GM12878 (cell line): ENCODE measurements at regions of chr14 and their contacts with region 1.

Region 1: DNA sequence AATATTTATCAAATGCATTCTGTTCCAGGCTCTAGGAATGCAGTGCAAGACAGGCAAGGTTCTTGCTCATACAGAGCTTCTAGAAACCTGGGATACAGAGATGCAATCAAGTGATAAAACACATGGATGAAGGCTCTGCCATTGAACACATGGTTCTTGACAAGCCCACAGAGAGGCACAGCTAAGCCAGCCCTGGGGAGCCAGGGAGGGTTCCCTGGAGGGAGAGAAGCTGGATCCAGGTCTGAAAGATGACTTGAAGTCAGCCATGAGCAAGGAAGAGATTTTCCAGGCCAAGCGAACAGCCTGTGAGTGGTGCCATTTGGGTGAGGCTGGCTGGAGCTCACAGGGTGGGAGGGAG is 66.2 kb downstream of the IRF2BPL start:
- DNase-seq: no peak
- ATAC-seq: no peak
- H3K4me3 ChIP-seq: peak overlapping the region; percentile 50; the same call in 1 of the 2 replicates
- H3K27ac ChIP-seq: peak overlapping the region; percentile 90
- H3K4me1 ChIP-seq: peaks cover 77% of the 10 kb centered on the region
- H3K27me3 ChIP-seq: no peaks in the 10 kb centered on the region
- CTCF ChIP-seq: no peak
- EP300 ChIP-seq: no peak
- POLR2A ChIP-seq: no peak
- RAD21 ChIP-seq: no peak

Region 2: DNA sequence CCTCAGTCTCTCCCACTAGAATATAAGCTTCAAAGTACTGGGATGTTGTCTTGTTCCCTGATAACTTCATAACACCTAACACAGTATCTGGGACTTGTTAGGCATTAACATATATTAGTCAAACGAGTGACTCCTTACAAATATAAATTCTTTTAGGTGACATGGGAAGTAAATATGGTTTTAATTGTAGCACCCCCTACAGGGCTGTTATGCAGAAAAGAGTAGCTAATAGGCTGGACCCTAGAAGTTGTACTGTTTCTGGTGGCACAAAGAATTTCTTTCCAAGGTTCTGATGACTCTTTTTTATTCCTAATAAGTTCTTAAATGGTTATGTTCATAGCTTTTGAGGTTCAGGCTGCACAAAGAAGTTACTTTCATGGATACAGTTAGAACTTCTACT is 780.7 kb before region 1 on chr14:
- CTCF ChIA-PET with region 1: no interaction called
- POLR2A ChIA-PET with region 1: no interaction called
- RAD21 ChIA-PET with region 1: no interaction called
- SMC1A ChIA-PET with region 1: no interaction called
- in situ Hi-C with region 1: no loop called
- intact Hi-C with region 1: no loop called
- DNase-seq: no peak
- ATAC-seq: no peak
- H3K4me3 ChIP-seq: no peak overlapping the region
- H3K27ac ChIP-seq: no peak overlapping the region
- H3K4me1 ChIP-seq: peaks cover 17% of the 10 kb centered on the region
- H3K27me3 ChIP-seq: no peaks in the 10 kb centered on the region
- CTCF ChIP-seq: peak; percentile 11 to 25 (median 16); a peak in 1 of 6 replicates
- EP300 ChIP-seq: no peak
- POLR2A ChIP-seq: no peak
- RAD21 ChIP-seq: 0 out of 2 replicates have a peak, but pooled peaks have one; percentile 7

Region 3: DNA sequence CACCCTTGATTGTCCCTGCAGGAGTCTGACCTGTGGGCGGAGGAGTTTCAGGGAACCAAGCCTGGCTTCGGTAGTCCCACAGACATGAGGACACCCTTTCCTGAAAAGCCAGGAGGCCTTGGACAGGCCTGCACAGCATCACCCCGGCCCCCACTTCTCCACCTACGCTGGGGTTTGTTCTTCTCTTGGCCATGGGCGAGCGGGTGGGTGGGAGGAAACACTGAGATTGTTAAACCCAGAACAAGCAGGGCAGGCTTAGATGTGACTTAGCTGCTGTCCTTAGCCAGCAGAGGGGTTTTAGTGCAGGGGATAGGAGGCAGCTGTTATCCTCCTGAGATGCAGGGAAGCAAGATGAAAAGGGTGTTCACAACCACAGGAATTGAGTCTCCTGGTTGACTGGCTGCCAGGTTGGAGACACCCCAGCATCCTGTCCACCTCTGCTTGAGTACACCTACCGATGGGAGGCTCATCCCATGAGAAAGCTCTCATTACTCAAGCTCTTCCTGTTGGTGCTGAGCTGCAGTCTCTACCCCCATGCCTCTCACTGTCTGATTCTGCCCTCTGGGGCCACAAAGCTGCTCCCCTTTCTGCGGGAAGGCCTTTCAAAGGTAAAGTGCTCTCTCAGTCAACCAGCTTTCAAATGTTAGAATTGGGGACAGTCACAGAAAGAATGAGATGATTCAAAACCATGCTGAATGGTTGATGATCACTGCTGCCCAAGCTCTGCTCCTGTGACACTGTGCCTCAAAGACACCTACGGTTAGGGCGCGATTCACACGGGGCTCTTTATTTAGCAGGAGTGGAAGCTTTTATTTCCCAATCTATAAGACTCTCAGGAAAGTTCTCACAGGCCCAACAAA is 20.1 kb before region 1 on chr14:
- CTCF ChIA-PET with region 1: interaction called, 21 read pairs
- POLR2A ChIA-PET with region 1: interaction called, 95 read pairs
- RAD21 ChIA-PET with region 1: interaction called, 285 read pairs
- SMC1A ChIA-PET with region 1: interaction called, 179 read pairs
- in situ Hi-C with region 1: no loop called
- intact Hi-C with region 1: loop called (anchors 2 kb)
- DNase-seq: peak; percentile 72
- ATAC-seq: peak; percentile 29
- H3K4me3 ChIP-seq: no peak overlapping the region
- H3K27ac ChIP-seq: no peak overlapping the region
- H3K4me1 ChIP-seq: peaks cover 21% of the 10 kb centered on the region
- H3K27me3 ChIP-seq: no peaks in the 10 kb centered on the region
- CTCF ChIP-seq: no peak; a peak in 1 of 6 replicates
- EP300 ChIP-seq: no peak
- POLR2A ChIP-seq: no peak
- RAD21 ChIP-seq: no peak

Region 4: GRCh38 chr14:76977793-76978720 is 15.8 kb after region 1 on chr14:
- CTCF ChIA-PET with region 1: interaction called, 22 read pairs
- POLR2A ChIA-PET with region 1: interaction called, 36 read pairs
- RAD21 ChIA-PET with region 1: interaction called, 71 read pairs
- SMC1A ChIA-PET with region 1: interaction called, 38 read pairs
- in situ Hi-C with region 1: no loop called
- intact Hi-C with region 1: loop called (anchors 2 kb)
- DNase-seq: peak; percentile 81
- ATAC-seq: peak; percentile 98
- H3K4me3 ChIP-seq: no peak overlapping the region
- H3K27ac ChIP-seq: peak overlapping the region; percentile 65
- H3K4me1 ChIP-seq: peaks cover 20% of the 10 kb centered on the region
- H3K27me3 ChIP-seq: no peaks in the 10 kb centered on the region
- CTCF ChIP-seq: no peak
- EP300 ChIP-seq: peak; percentile 64 to 75; a peak in 2 of 4 replicates
- POLR2A ChIP-seq: peak; percentile 72
- RAD21 ChIP-seq: 0 out of 2 replicates have a peak, but pooled peaks have one; percentile 20

Region 5: DNA sequence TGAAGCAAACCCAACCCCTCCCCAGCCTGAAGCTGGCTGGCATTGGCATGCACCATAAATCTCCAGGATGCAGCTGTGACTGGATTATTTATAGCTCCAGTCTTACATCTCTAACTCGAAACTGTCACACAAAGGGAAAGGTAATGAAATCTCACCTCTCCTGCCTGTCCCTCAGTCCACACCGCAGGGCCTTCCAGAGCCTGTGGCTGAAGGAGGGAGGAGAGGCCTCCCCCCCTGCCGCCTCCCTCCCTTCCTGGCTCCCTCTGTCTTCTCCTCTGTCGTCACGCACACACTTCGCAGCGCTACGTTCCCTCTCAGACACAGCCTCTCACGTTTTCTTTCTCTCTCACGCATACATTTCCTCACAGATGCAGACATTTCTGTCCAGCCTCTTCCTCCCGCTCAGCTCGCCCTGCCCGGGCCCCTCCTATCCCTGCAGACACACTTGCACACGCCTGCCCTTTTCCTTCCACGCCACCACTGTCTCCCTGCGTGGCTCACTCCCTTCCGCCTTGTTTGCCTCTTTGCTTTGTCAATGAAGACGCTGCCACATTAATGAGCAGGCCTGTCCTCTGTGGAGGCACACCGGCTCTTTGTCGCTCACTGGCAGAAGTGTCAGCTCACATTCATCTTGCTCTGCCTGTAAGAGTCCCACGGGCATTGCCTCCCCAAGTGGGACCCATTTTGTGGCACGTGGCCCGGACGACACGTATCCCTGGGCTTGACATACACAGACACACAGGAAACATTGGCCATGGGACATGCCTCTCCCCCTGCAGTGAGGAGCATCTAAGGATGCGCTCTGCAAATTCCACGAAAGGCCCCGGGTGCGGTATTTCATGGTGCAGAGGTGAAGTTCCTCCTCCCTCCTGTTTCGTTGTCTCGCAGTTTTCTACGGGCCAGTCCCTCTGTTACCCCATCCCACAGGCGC is 38.3 kb after region 1 on chr14:
- CTCF ChIA-PET with region 1: interaction called, 4 read pairs
- POLR2A ChIA-PET with region 1: interaction called, 6 read pairs
- RAD21 ChIA-PET with region 1: interaction called, 13 read pairs
- SMC1A ChIA-PET with region 1: interaction called, 7 read pairs
- in situ Hi-C with region 1: no loop called
- intact Hi-C with region 1: no loop called
- DNase-seq: no peak
- ATAC-seq: peak; percentile 57
- H3K4me3 ChIP-seq: peak overlapping the region; percentile 56; the same call in 1 of the 2 replicates
- H3K27ac ChIP-seq: peak overlapping the region; percentile 66
- H3K4me1 ChIP-seq: peaks cover 29% of the 10 kb centered on the region
- H3K27me3 ChIP-seq: no peaks in the 10 kb centered on the region
- CTCF ChIP-seq: no peak
- EP300 ChIP-seq: no peak
- POLR2A ChIP-seq: peak; percentile 57
- RAD21 ChIP-seq: no peak

Region 6: DNA sequence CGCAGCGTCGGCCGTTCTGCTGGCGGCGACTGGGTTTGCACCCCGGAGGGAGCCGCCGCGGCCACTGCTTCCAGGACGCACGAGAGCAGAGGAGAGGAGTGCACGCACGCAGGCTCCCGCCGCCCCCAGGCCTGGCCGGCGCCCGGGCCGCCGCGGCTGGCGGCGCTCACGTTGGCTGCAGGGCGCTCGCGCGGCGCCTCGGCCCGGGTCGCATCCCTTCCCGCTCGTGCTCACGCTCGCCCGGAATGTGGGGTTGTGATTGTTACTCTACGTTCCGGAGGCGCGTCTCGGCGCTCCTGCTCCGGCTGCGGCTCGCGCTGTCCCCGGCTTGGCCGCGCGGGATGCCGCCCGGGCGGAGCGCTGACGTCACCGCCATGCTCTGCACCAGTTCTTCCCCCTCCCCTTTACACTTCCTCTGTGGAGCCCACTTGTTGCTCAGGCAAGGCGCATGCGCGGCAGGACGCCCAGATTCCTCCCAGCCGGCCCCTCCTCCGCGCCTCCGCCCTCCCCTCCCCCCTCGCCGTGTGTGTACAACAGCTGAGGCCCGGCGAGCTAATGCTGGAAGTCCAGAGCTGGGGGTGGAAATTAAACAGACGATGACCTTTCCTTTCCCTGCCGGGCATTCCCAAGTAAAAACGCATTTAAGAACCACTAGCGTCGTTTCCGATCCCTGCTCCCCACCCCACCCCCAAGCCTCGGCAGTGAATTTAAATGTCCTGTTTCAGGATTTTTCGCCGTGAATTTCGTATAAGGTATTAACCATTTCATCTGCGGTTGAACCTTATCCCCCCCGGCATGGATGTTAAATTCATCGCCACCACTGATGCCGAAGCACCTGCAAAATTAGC is 66.3 kb after region 1 on chr14 and contains the start of gene IRF2BPL:
- CTCF ChIA-PET with region 1: interaction called, 22 read pairs
- POLR2A ChIA-PET with region 1: interaction called, 48 read pairs
- RAD21 ChIA-PET with region 1: interaction called, 101 read pairs
- SMC1A ChIA-PET with region 1: interaction called, 133 read pairs
- in situ Hi-C with region 1: no loop called
- intact Hi-C with region 1: loop called (anchors 1 kb)
- DNase-seq: peak; percentile 87
- ATAC-seq: peak; percentile 61
- H3K4me3 ChIP-seq: peak within 1 kb of the TSS; percentile 81
- H3K27ac ChIP-seq: peak within 1 kb of the TSS; percentile 98
- H3K4me1 ChIP-seq: peaks cover 38% of the 10 kb centered on the region
- H3K27me3 ChIP-seq: no peaks in the 10 kb centered on the region
- CTCF ChIP-seq: no peak
- EP300 ChIP-seq: peak in 1 of 2 experiments; percentile 29; a peak in 2 of 4 replicates
- POLR2A ChIP-seq: peak; percentile 83
- RAD21 ChIP-seq: no peak
- polyA plus RNA-seq, gene IRF2BPL: 1.2 to 1.9 TPM

Region 7: DNA sequence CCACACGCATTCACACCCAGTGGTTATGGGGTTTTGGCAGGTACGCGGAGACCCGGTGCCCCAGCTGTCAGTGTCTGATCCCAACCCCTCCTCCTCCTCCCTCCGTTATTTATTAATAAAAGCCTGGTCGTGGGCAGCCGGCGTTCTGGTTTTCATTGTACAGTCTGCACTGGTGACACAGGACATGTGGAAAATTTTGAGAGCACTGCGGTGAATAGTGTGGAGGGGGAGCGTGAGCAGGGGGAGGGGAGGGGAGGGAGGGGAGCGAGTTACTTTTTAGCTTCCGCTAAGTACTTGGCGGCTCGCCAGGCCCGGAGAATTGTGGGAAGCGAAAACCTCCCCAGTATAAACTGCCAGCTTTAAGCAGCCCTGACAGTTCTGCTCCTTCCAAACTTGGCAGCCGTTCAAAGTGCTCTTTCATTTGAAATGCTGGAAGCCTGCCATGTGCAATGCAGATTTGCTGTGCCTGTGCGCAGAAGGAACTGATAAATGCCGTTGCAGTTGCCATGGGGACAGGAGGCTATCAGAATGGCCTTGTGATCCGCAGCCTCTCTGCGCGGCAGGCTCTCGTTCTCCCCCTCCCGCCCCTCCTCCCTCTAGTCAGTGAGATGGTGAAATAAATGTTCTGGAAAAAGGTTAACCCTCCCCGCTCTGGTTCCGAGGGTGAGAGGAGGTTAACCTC is 77.9 kb after region 1 on chr14:
- CTCF ChIA-PET with region 1: interaction called, 33 read pairs
- POLR2A ChIA-PET with region 1: interaction called, 173 read pairs
- RAD21 ChIA-PET with region 1: interaction called, 125 read pairs
- SMC1A ChIA-PET with region 1: interaction called, 172 read pairs
- in situ Hi-C with region 1: loop called (anchors 5 kb)
- intact Hi-C with region 1: loop called (anchors 1 kb)
- DNase-seq: peak; percentile 99
- ATAC-seq: peak; percentile 75
- H3K4me3 ChIP-seq: peak overlapping the region; percentile 50
- H3K27ac ChIP-seq: peak overlapping the region; percentile 93
- H3K4me1 ChIP-seq: peaks cover 87% of the 10 kb centered on the region
- H3K27me3 ChIP-seq: no peaks in the 10 kb centered on the region
- CTCF ChIP-seq: no peak
- EP300 ChIP-seq: peak; percentile 42 to 61
- POLR2A ChIP-seq: peak; percentile 55; the same call in 1 of the 2 replicates
- RAD21 ChIP-seq: no peak

Region 8: DNA sequence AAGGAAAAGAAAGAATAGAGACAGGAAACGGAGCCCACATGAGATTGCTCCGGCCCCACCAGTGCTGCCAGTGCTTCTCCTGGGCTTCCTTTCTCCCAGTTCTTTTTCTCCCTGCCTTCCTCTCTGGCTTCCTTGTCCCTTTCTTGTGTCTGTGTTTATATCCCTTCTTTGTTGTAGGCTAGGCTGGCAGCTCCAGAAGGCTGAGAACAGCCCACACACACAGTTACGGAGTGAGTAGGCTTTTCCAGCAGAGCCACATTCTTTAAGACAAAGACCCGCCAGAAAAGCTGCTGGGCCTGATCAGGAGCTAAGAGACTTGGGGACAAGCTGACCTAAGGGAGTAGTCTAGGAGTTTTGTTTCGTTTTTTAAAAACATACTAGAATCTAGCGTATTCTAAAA is 148.8 kb after region 1 on chr14:
- CTCF ChIA-PET with region 1: no interaction called
- POLR2A ChIA-PET with region 1: no interaction called
- RAD21 ChIA-PET with region 1: no interaction called
- SMC1A ChIA-PET with region 1: no interaction called
- in situ Hi-C with region 1: no loop called
- intact Hi-C with region 1: no loop called
- DNase-seq: no peak
- ATAC-seq: no peak
- H3K4me3 ChIP-seq: no peak overlapping the region
- H3K27ac ChIP-seq: no peak overlapping the region
- H3K4me1 ChIP-seq: no peaks in the 10 kb centered on the region
- H3K27me3 ChIP-seq: no peaks in the 10 kb centered on the region
- CTCF ChIP-seq: no peak
- EP300 ChIP-seq: no peak
- POLR2A ChIP-seq: no peak
- RAD21 ChIP-seq: no peak

Region 9: DNA sequence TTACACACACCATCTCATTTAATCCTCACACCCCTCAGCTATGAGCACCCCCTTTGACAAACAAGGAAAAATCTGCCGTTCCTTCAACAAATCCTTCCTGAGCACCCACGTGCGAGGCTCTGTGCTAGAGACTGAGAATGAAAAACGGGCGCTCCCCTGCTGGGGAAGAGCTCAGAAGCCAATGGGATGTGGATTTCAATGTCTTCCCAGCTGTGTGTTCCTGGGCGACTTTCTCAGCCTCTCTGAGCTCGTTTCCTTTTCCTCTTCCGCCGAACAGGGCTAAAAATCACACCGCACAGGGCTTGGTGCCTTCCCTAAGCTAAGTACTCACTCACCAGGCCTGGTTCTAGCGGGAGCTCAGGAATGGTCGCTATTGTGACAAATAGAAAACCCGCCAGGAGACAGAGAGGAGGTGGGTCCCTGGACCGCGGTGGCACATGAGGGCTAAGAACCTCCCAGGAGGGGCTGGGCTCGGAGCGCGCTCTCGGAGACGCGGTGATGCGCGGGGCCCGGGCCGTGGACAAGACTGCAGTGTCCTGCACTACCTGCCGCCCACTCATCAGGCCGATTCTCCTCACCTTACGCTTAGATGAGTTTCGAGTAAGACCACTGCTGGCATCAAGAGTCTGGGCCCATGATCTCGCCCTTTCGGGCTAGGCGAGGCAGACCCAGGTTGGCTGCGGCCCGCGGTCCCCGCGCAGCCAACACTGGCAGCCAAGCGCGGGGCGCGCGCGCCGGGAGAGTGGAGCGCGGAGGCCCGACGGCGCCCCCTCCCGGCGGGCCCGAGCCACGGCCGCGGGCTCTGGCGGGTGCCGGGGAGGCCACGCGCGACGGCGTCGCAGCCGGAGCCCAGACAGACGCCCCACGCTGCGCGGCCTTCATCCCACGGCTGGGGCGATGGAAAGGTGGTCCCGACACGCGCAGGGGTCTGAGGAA is 162.3 kb after region 1 on chr14:
- CTCF ChIA-PET with region 1: interaction called, 3 read pairs
- POLR2A ChIA-PET with region 1: no interaction called
- RAD21 ChIA-PET with region 1: interaction called, 11 read pairs
- SMC1A ChIA-PET with region 1: interaction called, 5 read pairs
- in situ Hi-C with region 1: no loop called
- intact Hi-C with region 1: no loop called
- DNase-seq: no peak
- ATAC-seq: peak; percentile 50
- H3K4me3 ChIP-seq: peak overlapping the region; percentile 48; the same call in 1 of the 2 replicates
- H3K27ac ChIP-seq: peak overlapping the region; percentile 4; the same call in 1 of the 2 replicates
- H3K4me1 ChIP-seq: peaks cover 49% of the 10 kb centered on the region
- H3K27me3 ChIP-seq: peaks cover 6 to 7% of the 10 kb centered on the region in 2 experiments; a peak in 2 of 4 replicates
- CTCF ChIP-seq: peak; percentile 33 to 61 (median 52); a peak in 4 of 6 replicates
- EP300 ChIP-seq: no peak
- POLR2A ChIP-seq: peak; percentile 45; the same call in 1 of the 2 replicates
- RAD21 ChIP-seq: peak; percentile 59; the same call in 1 of the 2 replicates

Region 10: GRCh38 chr14:77219591-77219990 is 257.3 kb after region 1 on chr14:
- CTCF ChIA-PET with region 1: no interaction called
- POLR2A ChIA-PET with region 1: no interaction called
- RAD21 ChIA-PET with region 1: no interaction called
- SMC1A ChIA-PET with region 1: no interaction called
- in situ Hi-C with region 1: no loop called
- intact Hi-C with region 1: no loop called
- DNase-seq: no peak
- ATAC-seq: no peak
- H3K4me3 ChIP-seq: no peak overlapping the region
- H3K27ac ChIP-seq: no peak overlapping the region
- H3K4me1 ChIP-seq: no peaks in the 10 kb centered on the region
- H3K27me3 ChIP-seq: 0 out of 4 replicates have a peak, but pooled peaks cover 0 to 3% of the 10 kb centered on the region in 2 experiments
- CTCF ChIP-seq: no peak
- EP300 ChIP-seq: no peak
- POLR2A ChIP-seq: no peak
- RAD21 ChIP-seq: no peak